CD8-positive, alpha-beta memory T cell (primary cell): ENCODE measurements at regions of chr14 and their contacts with region 1.

Region 1: GRCh38 chr14:23076785-23077408 is 18.0 kb downstream of the ACIN1 start:
- DNase-seq: peak in 2 of 5 donors; percentile 19 to 50
- H3K4me3 ChIP-seq: no peak overlapping the region
- H3K4me3 Mint-ChIP-seq: no peak overlapping the region
- H3K27ac ChIP-seq: no peak overlapping the region
- H3K27ac Mint-ChIP-seq: peak overlapping the region in 3 of 8 donors; percentile 7 to 29 (median 20)
- H3K4me1 ChIP-seq: peaks cover 9% of the 10 kb centered on the region
- H3K4me1 Mint-ChIP-seq: peaks cover 7 to 18% (median 13%) of the 10 kb centered on the region in 3 donors
- H3K27me3 ChIP-seq: no peaks in the 10 kb centered on the region
- H3K27me3 Mint-ChIP-seq: no peaks in the 10 kb centered on the region

Region 2: GRCh38 chr14:23089498-23090253 is 12.8 kb after region 1 on chr14:
- CTCF ChIA-PET with region 1: interaction called, 35 read pairs
- POLR2A ChIA-PET with region 1: interaction called, 9 read pairs
- DNase-seq: no peak
- H3K4me3 ChIP-seq: no peak overlapping the region
- H3K4me3 Mint-ChIP-seq: peak overlapping the region in 2 of 7 donors; percentile 6 to 36
- H3K27ac ChIP-seq: no peak overlapping the region
- H3K27ac Mint-ChIP-seq: peak overlapping the region in 3 of 8 donors; percentile 3 to 63 (median 15)
- H3K4me1 ChIP-seq: peaks cover 20% of the 10 kb centered on the region
- H3K4me1 Mint-ChIP-seq: peaks cover 33 to 45% (median 39%) of the 10 kb centered on the region in 3 donors
- H3K27me3 ChIP-seq: no peaks in the 10 kb centered on the region
- H3K27me3 Mint-ChIP-seq: no peaks in the 10 kb centered on the region

Region 3: GRCh38 chr14:23186913-23187654 is 110.2 kb after region 1 on chr14:
- CTCF ChIA-PET with region 1: interaction called, 18 read pairs
- POLR2A ChIA-PET with region 1: no interaction called
- DNase-seq: peak in 1 of 5 donors; percentile 41
- H3K4me3 ChIP-seq: no peak overlapping the region
- H3K4me3 Mint-ChIP-seq: no peak overlapping the region
- H3K27ac ChIP-seq: no peak overlapping the region
- H3K27ac Mint-ChIP-seq: no peak overlapping the region
- H3K4me1 ChIP-seq: peaks cover 8% of the 10 kb centered on the region
- H3K4me1 Mint-ChIP-seq: no peaks in the 10 kb centered on the region
- H3K27me3 ChIP-seq: no peaks in the 10 kb centered on the region
- H3K27me3 Mint-ChIP-seq: peaks cover 4 to 20% of the 10 kb centered on the region in 2 donors